H1 (cell line): ENCODE measurements at regions of chr6 and their contacts with region 1.

Region 1: GRCh38 chr6:50087231-50087954 is 37.7 kb upstream of the DEFB112 start:
- DNase-seq: no peak
- H3K4me3 ChIP-seq: no peak overlapping the region
- H3K27ac ChIP-seq: no peak overlapping the region
- H3K4me1 ChIP-seq: no peaks in the 10 kb centered on the region
- H3K27me3 ChIP-seq: no peaks in the 10 kb centered on the region
- CTCF ChIP-seq: peak in 1 of 3 experiments; percentile 33; a peak in 2 of 4 replicates
- EP300 ChIP-seq: no peak
- POLR2A ChIP-seq: no peak
- RAD21 ChIP-seq: peak in 1 of 2 experiments; percentile 32; a peak in 2 of 4 replicates

Region 2: DNA sequence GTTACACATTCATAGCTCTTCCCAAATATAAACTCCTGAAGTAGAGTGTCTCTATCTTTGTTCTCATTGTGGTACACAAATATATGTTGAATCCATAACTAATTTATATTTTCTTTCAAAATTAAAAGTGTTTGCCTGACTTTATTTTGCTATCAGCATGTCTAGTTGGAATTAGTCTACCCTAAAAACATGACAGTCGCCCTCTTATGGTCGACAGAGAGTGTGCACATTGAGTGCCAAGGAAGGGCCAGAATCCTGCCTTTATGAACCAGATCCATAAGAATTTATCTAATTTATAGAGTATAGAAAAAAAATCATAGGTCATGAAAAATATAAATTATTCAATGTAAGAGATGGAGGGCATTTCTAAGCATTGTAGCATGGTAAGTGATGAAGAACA is 25.3 kb before region 1 on chr6:
- CTCF ChIA-PET with region 1: interaction called, 12 read pairs
- POLR2A ChIA-PET with region 1: no interaction called
- DNase-seq: no peak
- H3K4me3 ChIP-seq: no peak overlapping the region
- H3K27ac ChIP-seq: no peak overlapping the region
- H3K4me1 ChIP-seq: no peaks in the 10 kb centered on the region
- H3K27me3 ChIP-seq: no peaks in the 10 kb centered on the region
- CTCF ChIP-seq: peak in 2 of 3 experiments; percentile 43 to 61; a peak in 3 of 4 replicates
- EP300 ChIP-seq: no peak
- POLR2A ChIP-seq: no peak
- RAD21 ChIP-seq: peak; percentile 33 to 47

Region 3: GRCh38 chr6:50076431-50076830 is 11.0 kb before region 1 on chr6:
- CTCF ChIA-PET with region 1: interaction called, 16 read pairs
- POLR2A ChIA-PET with region 1: no interaction called
- DNase-seq: no peak
- H3K4me3 ChIP-seq: no peak overlapping the region
- H3K27ac ChIP-seq: no peak overlapping the region
- H3K4me1 ChIP-seq: no peaks in the 10 kb centered on the region
- H3K27me3 ChIP-seq: no peaks in the 10 kb centered on the region
- CTCF ChIP-seq: no peak
- EP300 ChIP-seq: no peak
- POLR2A ChIP-seq: no peak
- RAD21 ChIP-seq: no peak